Activated CD4-positive, alpha-beta memory T cell treated with anti-CD3 and anti-CD28 coated beads for 36 hours (primary cell): ENCODE measurements at regions of chr1 and their contacts with region 1.

Region 1: GRCh38 chr1:46527474-46528296 is 23.8 kb downstream of the KNCN start:
- DNase-seq: peak; percentile 87
- H3K4me3 Mint-ChIP-seq: no peak overlapping the region
- H3K27ac Mint-ChIP-seq: no peak overlapping the region
- H3K4me1 Mint-ChIP-seq: peaks cover 22% of the 10 kb centered on the region
- H3K27me3 Mint-ChIP-seq: peaks cover 32% of the 10 kb centered on the region

Region 2: GRCh38 chr1:46477153-46477929 is 50.3 kb before region 1 on chr1:
- CTCF ChIA-PET with region 1: interaction called, 111 read pairs
- POLR2A ChIA-PET with region 1: no interaction called
- intact Hi-C with region 1: loop called (anchors 1 kb)
- DNase-seq: peak; percentile 88
- H3K4me3 Mint-ChIP-seq: no peak overlapping the region
- H3K27ac Mint-ChIP-seq: no peak overlapping the region
- H3K4me1 Mint-ChIP-seq: no peaks in the 10 kb centered on the region
- H3K27me3 Mint-ChIP-seq: peaks cover 24% of the 10 kb centered on the region

Region 3: DNA sequence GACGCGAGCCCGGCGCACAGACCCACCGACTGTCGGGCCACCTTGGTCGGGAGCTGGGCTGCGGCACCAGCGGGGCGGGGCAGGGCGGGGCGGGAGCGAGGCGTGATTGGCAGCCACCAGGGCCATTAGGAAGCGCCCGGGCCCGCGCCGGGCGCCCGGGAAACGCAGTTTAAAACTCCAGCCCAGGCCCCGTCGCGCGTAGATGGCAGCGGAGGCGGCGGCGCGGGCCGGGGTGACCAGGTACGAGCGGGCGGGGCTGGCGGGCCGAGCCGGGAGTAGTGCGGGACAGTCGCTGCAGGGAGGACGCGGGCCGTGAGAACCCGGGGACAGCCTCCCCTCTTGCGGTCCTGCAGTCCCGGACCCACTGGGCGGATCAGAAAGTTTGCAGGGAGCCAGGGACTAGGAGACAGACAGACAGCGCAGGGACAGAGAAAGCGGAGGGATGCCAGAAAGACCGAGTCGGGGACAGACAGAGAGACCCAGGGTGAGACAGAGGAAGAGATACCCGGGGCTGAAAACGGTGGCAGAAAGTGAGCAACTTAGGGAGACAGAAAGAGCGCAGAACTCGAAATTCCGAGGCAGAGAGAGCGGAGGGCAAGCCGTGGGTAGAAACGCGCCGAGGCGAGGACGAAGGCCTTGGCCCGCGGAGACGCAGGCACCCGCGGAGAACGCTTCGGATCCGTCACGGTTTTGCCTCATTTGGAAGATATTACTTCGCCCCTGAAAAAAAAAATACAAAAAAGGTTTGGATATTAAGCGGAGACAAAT is 37.9 kb before region 1 on chr1 and contains the start of gene DMBX1:
- CTCF ChIA-PET with region 1: interaction called, 23 read pairs
- POLR2A ChIA-PET with region 1: no interaction called
- intact Hi-C with region 1: loop called (anchors 2 kb)
- DNase-seq: peak; percentile 68
- H3K4me3 Mint-ChIP-seq: peak within 1 kb of the TSS; percentile 67
- H3K27ac Mint-ChIP-seq: no peak within 1 kb of the TSS
- H3K4me1 Mint-ChIP-seq: peaks cover 33% of the 10 kb centered on the region
- H3K27me3 Mint-ChIP-seq: peaks cover 81% of the 10 kb centered on the region
- total RNA-seq, gene DMBX1: 0.10 to 0.12 TPM

Region 4: DNA sequence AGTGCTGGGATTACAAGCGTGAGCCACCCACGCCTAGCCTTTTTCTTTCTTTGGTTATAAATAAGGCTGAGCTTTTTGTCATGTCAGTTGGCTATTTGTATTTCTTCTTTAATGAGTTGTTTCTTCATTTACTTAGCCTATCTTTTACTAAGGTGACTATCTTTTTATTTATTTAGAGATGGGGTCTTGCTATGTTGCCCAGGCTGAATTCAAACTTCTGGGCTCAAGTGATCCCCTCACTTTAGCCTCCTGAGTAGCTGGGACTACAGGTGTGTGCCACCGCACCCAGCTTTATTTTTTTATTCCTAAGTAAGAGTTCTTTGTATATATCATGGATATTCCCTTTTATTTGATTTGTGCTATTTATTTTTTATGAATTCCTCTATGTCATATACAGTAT is 26.2 kb before region 1 on chr1:
- CTCF ChIA-PET with region 1: interaction called, 17 read pairs
- POLR2A ChIA-PET with region 1: no interaction called
- intact Hi-C with region 1: no loop called
- DNase-seq: no peak
- H3K4me3 Mint-ChIP-seq: no peak overlapping the region
- H3K27ac Mint-ChIP-seq: no peak overlapping the region
- H3K4me1 Mint-ChIP-seq: no peaks in the 10 kb centered on the region
- H3K27me3 Mint-ChIP-seq: peaks cover 21% of the 10 kb centered on the region

Region 5: GRCh38 chr1:46538147-46538546 is 10.5 kb after region 1 on chr1:
- CTCF ChIA-PET with region 1: interaction called, 24 read pairs
- POLR2A ChIA-PET with region 1: interaction called, 5 read pairs
- intact Hi-C with region 1: no loop called
- DNase-seq: no peak
- H3K4me3 Mint-ChIP-seq: no peak overlapping the region
- H3K27ac Mint-ChIP-seq: no peak overlapping the region
- H3K4me1 Mint-ChIP-seq: peaks cover 4% of the 10 kb centered on the region
- H3K27me3 Mint-ChIP-seq: peaks cover 10% of the 10 kb centered on the region

Region 6: DNA sequence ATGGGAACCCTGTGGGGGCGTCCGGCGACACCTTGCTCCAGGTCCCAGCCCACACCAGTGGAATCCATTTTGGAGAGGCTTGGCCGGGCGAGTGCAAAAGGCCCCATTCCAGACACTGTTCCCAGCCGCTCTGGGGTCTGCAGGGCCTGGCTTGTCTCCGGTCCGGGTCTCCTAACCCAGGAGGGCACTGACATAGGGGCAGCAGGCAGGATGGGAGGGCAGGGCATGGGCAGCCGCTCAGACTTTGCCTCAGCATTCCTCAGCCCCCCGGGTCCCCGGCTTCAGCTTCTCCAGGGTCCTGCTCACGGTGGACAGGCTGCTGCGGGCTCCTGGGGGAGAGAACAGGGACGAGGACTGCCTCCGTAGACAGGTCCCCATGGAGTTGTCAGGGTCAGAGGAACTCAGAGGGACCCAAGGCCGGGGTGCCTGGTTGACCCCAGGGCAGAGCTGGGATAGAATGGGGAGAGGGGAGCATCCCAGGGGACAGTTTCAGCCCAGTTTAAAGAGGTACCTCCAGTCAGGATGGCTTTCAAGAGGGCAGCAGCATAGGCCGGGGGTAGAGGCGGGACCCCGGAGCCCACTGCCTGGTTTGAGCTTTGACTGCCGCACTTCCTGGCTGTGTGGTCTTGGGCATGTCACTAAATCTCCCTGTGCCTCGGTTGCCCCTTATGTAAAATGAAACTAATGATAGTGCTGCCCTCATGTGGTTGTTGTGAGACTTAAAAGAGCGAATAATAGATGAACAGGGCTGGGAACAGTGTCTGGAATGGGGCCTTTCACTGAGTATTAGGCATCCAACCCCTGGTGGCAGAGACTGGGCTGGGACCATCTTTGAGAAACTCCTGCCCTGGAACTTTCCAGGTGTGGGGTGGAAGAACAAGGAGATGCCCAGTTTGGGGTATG is 20.0 kb after region 1 on chr1:
- CTCF ChIA-PET with region 1: interaction called, 31 read pairs
- POLR2A ChIA-PET with region 1: no interaction called
- intact Hi-C with region 1: no loop called
- DNase-seq: no peak
- H3K4me3 Mint-ChIP-seq: no peak overlapping the region
- H3K27ac Mint-ChIP-seq: no peak overlapping the region
- H3K4me1 Mint-ChIP-seq: peaks cover 11% of the 10 kb centered on the region
- H3K27me3 Mint-ChIP-seq: peaks cover 35% of the 10 kb centered on the region

Region 7: GRCh38 chr1:46558141-46558963 is 30.7 kb after region 1 on chr1:
- CTCF ChIA-PET with region 1: no interaction called
- POLR2A ChIA-PET with region 1: no interaction called
- intact Hi-C with region 1: no loop called
- DNase-seq: no peak
- H3K4me3 Mint-ChIP-seq: no peak overlapping the region
- H3K27ac Mint-ChIP-seq: no peak overlapping the region
- H3K4me1 Mint-ChIP-seq: no peaks in the 10 kb centered on the region
- H3K27me3 Mint-ChIP-seq: no peaks in the 10 kb centered on the region

Region 8: GRCh38 chr1:46587069-46587468 is 59.4 kb after region 1 on chr1:
- CTCF ChIA-PET with region 1: no interaction called
- POLR2A ChIA-PET with region 1: no interaction called
- intact Hi-C with region 1: no loop called
- DNase-seq: no peak
- H3K4me3 Mint-ChIP-seq: no peak overlapping the region
- H3K27ac Mint-ChIP-seq: no peak overlapping the region
- H3K4me1 Mint-ChIP-seq: peaks cover 8% of the 10 kb centered on the region
- H3K27me3 Mint-ChIP-seq: no peaks in the 10 kb centered on the region

Region 9: GRCh38 chr1:46724991-46725735 is 197.5 kb after region 1 on chr1:
- CTCF ChIA-PET with region 1: interaction called, 26 read pairs
- POLR2A ChIA-PET with region 1: no interaction called
- intact Hi-C with region 1: loop called (anchors 2 kb)
- DNase-seq: peak; percentile 79
- H3K4me3 Mint-ChIP-seq: no peak overlapping the region
- H3K27ac Mint-ChIP-seq: no peak overlapping the region
- H3K4me1 Mint-ChIP-seq: no peaks in the 10 kb centered on the region
- H3K27me3 Mint-ChIP-seq: peaks cover 31% of the 10 kb centered on the region